Activated naive CD8-positive, alpha-beta T cell treated with anti-CD3 and anti-CD28 coated beads, Interleukin-2, amount 10 ng/mL, durations not matched to agents 7 days and 5 days (primary cell): ENCODE measurements at regions of chr1 and their contacts with region 1.

Region 1: GRCh38 chr1:47333922-47334764 is 553 bp downstream of the CMPK1 start:
- DNase-seq: peak; percentile 89
- ATAC-seq: peak; percentile 90
- H3K4me3 Mint-ChIP-seq: peak overlapping the region; percentile 93
- H3K27ac Mint-ChIP-seq: peak overlapping the region; percentile 95
- H3K4me1 Mint-ChIP-seq: peaks cover 11% of the 10 kb centered on the region
- H3K27me3 Mint-ChIP-seq: no peaks in the 10 kb centered on the region

Region 2: DNA sequence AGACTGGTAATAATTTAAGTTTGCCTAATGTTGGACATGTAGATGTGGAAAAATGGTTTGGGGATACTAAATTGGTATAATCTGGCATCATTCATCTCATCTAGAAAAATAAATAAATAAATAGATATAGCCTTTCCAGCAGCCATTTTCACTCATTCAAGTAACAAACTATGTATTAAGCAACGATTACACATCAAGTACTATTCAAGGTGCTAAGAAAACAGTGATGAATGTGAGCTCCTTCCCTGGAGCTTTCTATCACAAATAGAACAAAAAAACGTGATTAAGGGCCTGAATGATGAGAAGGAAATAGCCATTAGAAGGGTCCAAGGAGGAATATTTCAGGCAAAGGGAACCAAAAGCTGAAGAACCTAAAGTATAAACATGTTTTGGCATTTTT is 57.3 kb before region 1 on chr1:
- POLR2A ChIA-PET with region 1: no interaction called
- DNase-seq: no peak
- ATAC-seq: no peak
- H3K4me3 Mint-ChIP-seq: no peak overlapping the region
- H3K27ac Mint-ChIP-seq: no peak overlapping the region
- H3K4me1 Mint-ChIP-seq: peaks cover 7% of the 10 kb centered on the region
- H3K27me3 Mint-ChIP-seq: no peaks in the 10 kb centered on the region

Region 3: GRCh38 chr1:47313915-47314664 is 20.1 kb before region 1 on chr1 and contains the start of gene STIL:
- POLR2A ChIA-PET with region 1: interaction called, 52 read pairs
- DNase-seq: peak; percentile 95
- ATAC-seq: peak; percentile 97
- H3K4me3 Mint-ChIP-seq: peak within 1 kb of the TSS; percentile 99
- H3K27ac Mint-ChIP-seq: peak within 1 kb of the TSS; percentile 86
- H3K4me1 Mint-ChIP-seq: peaks cover 13% of the 10 kb centered on the region
- H3K27me3 Mint-ChIP-seq: no peaks in the 10 kb centered on the region
- total RNA-seq, gene STIL: 32.4 to 33.1 TPM